Activated CD8-positive, alpha-beta T cell treated with anti-CD3 and anti-CD28 coated beads, Interleukin-2, amount 10 ng/mL, durations not matched to agents 7 days and 5 days (primary cell): ENCODE measurements at regions of chr1 and their contacts with region 1.

Region 1: GRCh38 chr1:1615256-1616044 is at the start of gene MIB2:
- DNase-seq: peak; percentile 97
- ATAC-seq: peak; percentile 86
- H3K4me3 Mint-ChIP-seq: peak within 1 kb of the TSS; percentile 88
- H3K27ac Mint-ChIP-seq: peak within 1 kb of the TSS; percentile 94
- H3K4me1 Mint-ChIP-seq: peaks cover 39% of the 10 kb centered on the region
- H3K27me3 Mint-ChIP-seq: no peaks in the 10 kb centered on the region
- total RNA-seq, gene MIB2: 49.3 to 50.7 TPM

Region 2: DNA sequence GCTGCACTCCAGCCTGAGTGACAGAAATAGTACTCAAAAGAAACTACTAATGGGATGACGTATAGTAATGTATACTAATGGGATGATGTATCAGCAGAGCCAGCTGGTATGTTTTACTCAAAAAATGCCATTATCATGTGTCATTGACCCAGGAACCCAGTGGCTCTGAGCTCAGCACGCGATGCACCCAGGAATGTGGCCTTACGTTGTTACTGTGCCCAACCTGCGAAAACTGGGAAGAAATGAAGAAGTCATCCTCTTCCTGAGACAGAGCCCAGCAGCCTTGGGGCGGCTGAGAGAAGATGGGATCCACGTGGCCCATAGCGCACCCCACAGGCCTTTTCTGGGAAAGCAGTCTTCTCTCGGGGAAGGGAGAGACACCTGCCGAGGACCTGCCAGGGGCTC is 350.6 kb before region 1 on chr1:
- CTCF ChIA-PET with region 1: no interaction called
- POLR2A ChIA-PET with region 1: no interaction called
- DNase-seq: no peak
- ATAC-seq: no peak
- H3K4me3 Mint-ChIP-seq: no peak overlapping the region
- H3K27ac Mint-ChIP-seq: no peak overlapping the region
- H3K4me1 Mint-ChIP-seq: peaks cover 14% of the 10 kb centered on the region
- H3K27me3 Mint-ChIP-seq: no peaks in the 10 kb centered on the region

Region 3: DNA sequence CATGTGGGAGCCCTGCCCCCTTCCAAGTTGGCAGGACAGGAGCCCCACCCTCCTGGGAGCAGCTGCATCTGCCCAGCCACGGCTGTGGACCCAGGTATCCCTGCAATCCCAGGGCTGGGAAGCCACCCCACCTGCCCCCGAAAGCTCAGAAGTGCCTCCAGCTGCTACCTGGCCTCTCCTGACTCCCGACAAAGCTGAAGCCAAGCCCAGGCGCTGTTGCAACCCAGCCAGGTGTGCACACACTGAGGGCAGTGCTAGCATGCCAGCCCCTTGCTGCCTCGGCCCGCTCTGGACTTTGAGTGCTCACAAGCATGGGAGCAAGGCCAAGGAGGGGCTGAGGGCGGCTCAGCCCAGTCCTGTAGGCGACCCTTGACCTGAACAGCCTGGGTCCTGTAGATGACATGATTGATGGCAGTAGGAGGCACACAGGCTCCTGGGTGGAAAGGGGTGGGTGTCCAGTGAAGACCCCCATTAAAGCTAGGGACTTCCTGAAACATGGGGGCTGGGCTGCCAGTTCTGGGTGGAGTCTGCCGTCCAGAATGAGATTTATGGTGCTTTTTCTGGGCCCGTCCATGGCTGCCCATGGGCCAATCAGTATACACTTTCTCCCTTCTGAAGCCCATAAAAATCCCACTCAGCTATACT is 38.0 kb before region 1 on chr1:
- CTCF ChIA-PET with region 1: no interaction called
- POLR2A ChIA-PET with region 1: interaction called, 11 read pairs
- DNase-seq: no peak
- ATAC-seq: no peak
- H3K4me3 Mint-ChIP-seq: no peak overlapping the region
- H3K27ac Mint-ChIP-seq: no peak overlapping the region
- H3K4me1 Mint-ChIP-seq: peaks cover 14% of the 10 kb centered on the region
- H3K27me3 Mint-ChIP-seq: peaks cover 9% of the 10 kb centered on the region

Region 4: GRCh38 chr1:1630271-1630964 is 15.0 kb after region 1 on chr1:
- CTCF ChIA-PET with region 1: interaction called, 21 read pairs
- POLR2A ChIA-PET with region 1: interaction called, 7 read pairs
- DNase-seq: peak; percentile 96
- ATAC-seq: peak; percentile 77
- H3K4me3 Mint-ChIP-seq: peak overlapping the region; percentile 76
- H3K27ac Mint-ChIP-seq: peak overlapping the region; percentile 97
- H3K4me1 Mint-ChIP-seq: peaks cover 9% of the 10 kb centered on the region
- H3K27me3 Mint-ChIP-seq: peaks cover 4% of the 10 kb centered on the region

Region 5: DNA sequence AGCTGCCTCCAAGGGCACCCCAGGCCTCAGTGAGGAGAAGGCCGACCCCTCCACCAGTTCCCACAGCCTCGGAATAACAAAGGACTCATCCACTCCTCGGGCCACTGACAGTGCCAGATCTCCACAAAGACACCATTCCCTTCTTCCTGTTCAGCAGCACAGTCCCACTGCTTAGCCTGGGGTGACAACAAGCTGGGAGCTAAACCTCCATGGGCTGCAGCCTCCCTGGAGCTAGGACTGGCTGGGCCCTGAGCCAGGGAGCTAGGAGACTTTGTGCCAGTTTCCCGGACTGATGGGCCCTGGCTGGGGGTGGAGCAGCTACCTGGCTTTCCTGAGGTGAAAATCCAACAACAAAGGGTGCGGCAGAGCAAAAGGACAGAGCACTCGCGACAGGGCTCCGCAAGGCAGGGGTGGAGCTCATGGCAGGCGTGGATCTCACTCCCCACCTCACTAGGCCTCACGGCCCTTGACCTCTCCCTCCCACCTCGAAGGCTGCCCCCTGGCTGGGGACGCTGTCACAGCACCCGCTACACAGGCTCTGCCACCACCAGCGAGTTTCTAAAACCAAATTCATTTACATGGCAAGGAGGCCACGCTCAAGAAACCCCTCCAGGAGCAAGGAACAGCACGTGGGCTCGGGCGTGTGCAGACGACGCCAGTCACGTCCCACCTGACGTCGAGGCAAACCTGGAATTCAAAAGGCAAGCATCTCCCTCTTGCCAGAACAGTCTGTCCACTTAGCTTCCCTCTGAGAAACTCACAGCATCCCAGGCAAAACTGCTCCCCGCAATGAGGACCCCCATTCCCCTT is 63.3 kb after region 1 on chr1:
- CTCF ChIA-PET with region 1: interaction called, 11 read pairs
- POLR2A ChIA-PET with region 1: interaction called, 3 read pairs
- DNase-seq: peak; percentile 88
- ATAC-seq: peak; percentile 82
- H3K4me3 Mint-ChIP-seq: peak overlapping the region; percentile 89
- H3K27ac Mint-ChIP-seq: peak overlapping the region; percentile 98
- H3K4me1 Mint-ChIP-seq: peaks cover 26% of the 10 kb centered on the region
- H3K27me3 Mint-ChIP-seq: no peaks in the 10 kb centered on the region

Region 6: GRCh38 chr1:1815606-1816281 is 200.3 kb after region 1 on chr1:
- CTCF ChIA-PET with region 1: no interaction called
- POLR2A ChIA-PET with region 1: no interaction called
- DNase-seq: no peak
- ATAC-seq: no peak
- H3K4me3 Mint-ChIP-seq: no peak overlapping the region
- H3K27ac Mint-ChIP-seq: peak overlapping the region; percentile 45
- H3K4me1 Mint-ChIP-seq: no peaks in the 10 kb centered on the region
- H3K27me3 Mint-ChIP-seq: no peaks in the 10 kb centered on the region